Caco-2 (cell line): ENCODE measurements at regions of chr10 and their contacts with region 1.

Region 1: DNA sequence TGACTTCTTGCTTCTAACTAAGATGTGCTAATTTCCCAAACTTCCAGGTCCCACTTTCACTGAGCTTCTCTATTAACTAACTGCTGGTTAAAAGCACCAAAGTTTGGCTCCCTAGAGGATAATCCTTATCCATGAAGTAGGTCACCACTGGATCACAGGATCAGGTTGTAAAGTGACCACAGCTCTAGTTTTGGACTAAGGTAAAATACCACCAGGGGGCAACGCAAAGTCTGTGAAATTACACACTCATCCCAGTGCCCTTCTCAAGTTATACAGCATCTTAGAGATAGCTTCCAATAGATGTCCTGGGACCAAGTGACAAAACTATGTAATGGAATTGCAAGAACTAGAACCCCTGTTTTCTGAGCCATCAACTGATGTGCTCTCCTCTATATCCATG is 116.4 kb upstream of the ASAH2 start:
- DNase-seq: peak; percentile 52 to 67
- H3K4me3 ChIP-seq: no peak overlapping the region
- H3K4me3 Mint-ChIP-seq: no peak overlapping the region
- H3K27ac Mint-ChIP-seq: no peak overlapping the region
- H3K4me1 ChIP-seq: 0 out of 2 replicates have a peak, but pooled peaks cover 3% of the 10 kb centered on the region
- H3K4me1 Mint-ChIP-seq: no peaks in the 10 kb centered on the region
- H3K27me3 ChIP-seq: no peaks in the 10 kb centered on the region
- H3K27me3 Mint-ChIP-seq: no peaks in the 10 kb centered on the region
- CTCF ChIP-seq: peak; percentile 70 to 83

Region 2: GRCh38 chr10:50281967-50282522 is 85.7 kb before region 1 on chr10:
- CTCF ChIA-PET with region 1: no interaction called
- POLR2A ChIA-PET with region 1: no interaction called
- intact Hi-C with region 1: no loop called
- DNase-seq: no peak
- H3K4me3 ChIP-seq: no peak overlapping the region
- H3K4me3 Mint-ChIP-seq: no peak overlapping the region
- H3K27ac Mint-ChIP-seq: no peak overlapping the region
- H3K4me1 ChIP-seq: no peaks in the 10 kb centered on the region
- H3K4me1 Mint-ChIP-seq: peaks cover 5% of the 10 kb centered on the region
- H3K27me3 ChIP-seq: no peaks in the 10 kb centered on the region
- H3K27me3 Mint-ChIP-seq: peaks cover 15% of the 10 kb centered on the region
- CTCF ChIP-seq: no peak

Region 3: DNA sequence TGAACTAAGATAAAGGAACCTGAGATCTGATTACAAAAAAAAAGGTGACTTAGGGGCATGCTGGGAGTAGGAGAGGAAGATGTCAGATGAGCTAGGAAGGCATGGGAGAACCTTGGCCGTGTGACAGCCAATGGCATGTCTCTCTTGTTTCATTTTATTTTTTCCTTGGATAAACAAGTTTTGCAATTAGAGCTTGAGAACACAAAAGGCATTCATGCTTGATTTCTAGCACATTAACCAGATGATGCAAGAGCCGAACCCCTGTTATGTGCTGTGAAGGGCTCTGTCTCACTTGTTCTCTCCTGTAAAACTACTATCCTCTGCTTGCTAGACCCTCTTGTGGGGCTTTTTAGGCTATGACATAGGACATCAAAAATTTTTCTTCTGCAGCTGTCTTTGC is 17.9 kb after region 1 on chr10:
- CTCF ChIA-PET with region 1: interaction called, 14 read pairs
- POLR2A ChIA-PET with region 1: interaction called, 3 read pairs
- intact Hi-C with region 1: no loop called
- DNase-seq: no peak
- H3K4me3 ChIP-seq: no peak overlapping the region
- H3K4me3 Mint-ChIP-seq: no peak overlapping the region
- H3K27ac Mint-ChIP-seq: no peak overlapping the region
- H3K4me1 ChIP-seq: peaks cover 16% of the 10 kb centered on the region
- H3K4me1 Mint-ChIP-seq: peaks cover 23% of the 10 kb centered on the region
- H3K27me3 ChIP-seq: no peaks in the 10 kb centered on the region
- H3K27me3 Mint-ChIP-seq: no peaks in the 10 kb centered on the region
- CTCF ChIP-seq: no peak

Region 4: GRCh38 chr10:50404021-50404773 is 36.5 kb after region 1 on chr10:
- CTCF ChIA-PET with region 1: no interaction called
- POLR2A ChIA-PET with region 1: no interaction called
- intact Hi-C with region 1: no loop called
- DNase-seq: no peak
- H3K4me3 ChIP-seq: no peak overlapping the region
- H3K4me3 Mint-ChIP-seq: no peak overlapping the region
- H3K27ac Mint-ChIP-seq: no peak overlapping the region
- H3K4me1 ChIP-seq: peaks cover 41% of the 10 kb centered on the region
- H3K4me1 Mint-ChIP-seq: peaks cover 30% of the 10 kb centered on the region
- H3K27me3 ChIP-seq: no peaks in the 10 kb centered on the region
- H3K27me3 Mint-ChIP-seq: no peaks in the 10 kb centered on the region
- CTCF ChIP-seq: no peak

Region 5: GRCh38 chr10:50497757-50498156 is 130.0 kb after region 1 on chr10:
- CTCF ChIA-PET with region 1: no interaction called
- POLR2A ChIA-PET with region 1: no interaction called
- intact Hi-C with region 1: no loop called
- DNase-seq: no peak
- H3K4me3 ChIP-seq: no peak overlapping the region
- H3K4me3 Mint-ChIP-seq: no peak overlapping the region
- H3K27ac Mint-ChIP-seq: no peak overlapping the region
- H3K4me1 ChIP-seq: no peaks in the 10 kb centered on the region
- H3K4me1 Mint-ChIP-seq: no peaks in the 10 kb centered on the region
- H3K27me3 ChIP-seq: no peaks in the 10 kb centered on the region
- H3K27me3 Mint-ChIP-seq: no peaks in the 10 kb centered on the region
- CTCF ChIP-seq: no peak

Region 6: GRCh38 chr10:50552771-50553535 is 185.2 kb after region 1 on chr10:
- CTCF ChIA-PET with region 1: no interaction called
- POLR2A ChIA-PET with region 1: no interaction called
- intact Hi-C with region 1: loop called (anchors 10 kb)
- DNase-seq: peak; percentile 65 to 67
- H3K4me3 ChIP-seq: no peak overlapping the region
- H3K4me3 Mint-ChIP-seq: no peak overlapping the region
- H3K27ac Mint-ChIP-seq: no peak overlapping the region
- H3K4me1 ChIP-seq: peaks cover 21% of the 10 kb centered on the region
- H3K4me1 Mint-ChIP-seq: peaks cover 19% of the 10 kb centered on the region
- H3K27me3 ChIP-seq: no peaks in the 10 kb centered on the region
- H3K27me3 Mint-ChIP-seq: no peaks in the 10 kb centered on the region
- CTCF ChIP-seq: peak; percentile 53 to 64

Region 7: DNA sequence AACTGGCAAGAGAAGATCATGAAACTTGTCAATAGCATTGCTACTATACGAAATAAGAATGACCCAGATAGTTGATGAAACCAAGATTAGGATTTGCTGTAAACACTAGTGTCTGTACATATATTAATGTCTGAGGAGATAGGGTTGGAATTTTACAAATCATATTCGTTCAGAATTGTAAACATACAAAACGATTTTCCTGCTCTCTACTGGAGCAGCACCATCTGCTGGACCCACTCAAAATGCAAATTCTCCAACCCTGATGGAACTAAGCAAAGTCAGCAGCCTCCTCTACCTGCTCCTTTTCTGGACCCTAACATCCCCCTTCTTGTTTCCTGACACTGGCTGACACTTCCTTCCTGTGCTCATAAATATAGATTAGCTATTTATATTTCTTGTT is 285.4 kb after region 1 on chr10:
- CTCF ChIA-PET with region 1: interaction called, 3 read pairs
- POLR2A ChIA-PET with region 1: no interaction called
- intact Hi-C with region 1: loop called (anchors 1 kb)
- DNase-seq: peak in 1 of 2 experiments; percentile 56
- H3K4me3 ChIP-seq: no peak overlapping the region
- H3K4me3 Mint-ChIP-seq: no peak overlapping the region
- H3K27ac Mint-ChIP-seq: no peak overlapping the region
- H3K4me1 ChIP-seq: peaks cover 26% of the 10 kb centered on the region; the same call in 1 of the 2 replicates
- H3K4me1 Mint-ChIP-seq: no peaks in the 10 kb centered on the region
- H3K27me3 ChIP-seq: no peaks in the 10 kb centered on the region
- H3K27me3 Mint-ChIP-seq: no peaks in the 10 kb centered on the region
- CTCF ChIP-seq: peak; percentile 59 to 84